GM12878 (cell line): ENCODE measurements at regions of chr4 and their contacts with region 1.

Region 1: GRCh38 chr4:81052119-81053068 is 21.9 kb downstream of the BMP3 start:
- DNase-seq: peak; percentile 91
- ATAC-seq: peak; percentile 99
- H3K4me3 ChIP-seq: no peak overlapping the region
- H3K27ac ChIP-seq: no peak overlapping the region; the same call in 1 of the 2 replicates
- H3K4me1 ChIP-seq: peaks cover 14% of the 10 kb centered on the region
- H3K27me3 ChIP-seq: no peaks in the 10 kb centered on the region
- CTCF ChIP-seq: peak; percentile 61 to 73 (median 66)
- EP300 ChIP-seq: peak; percentile 84 to 91; a peak in 3 of 4 replicates
- POLR2A ChIP-seq: no peak
- RAD21 ChIP-seq: peak; percentile 76

Region 2: DNA sequence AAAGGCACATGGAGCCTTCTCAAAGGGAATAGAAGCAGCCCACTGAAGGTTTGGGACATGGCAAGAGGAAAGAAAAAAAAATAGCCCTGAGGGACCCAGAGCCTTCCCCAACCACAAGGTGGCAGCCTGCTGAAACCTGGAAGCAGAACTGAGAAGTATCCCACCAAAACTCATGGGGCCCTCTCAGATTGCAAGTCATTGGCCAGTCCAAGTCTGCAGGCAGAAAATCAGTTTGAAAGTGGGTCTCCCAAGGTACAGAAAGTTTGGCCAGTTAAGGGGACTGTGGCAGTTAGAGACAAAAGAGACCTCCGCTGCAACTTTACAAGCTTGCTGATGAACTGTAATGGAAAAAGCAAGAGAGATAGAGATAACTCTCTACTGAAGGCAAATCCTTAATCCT is 1135.1 kb before region 1 on chr4:
- CTCF ChIA-PET with region 1: no interaction called
- POLR2A ChIA-PET with region 1: no interaction called
- RAD21 ChIA-PET with region 1: no interaction called
- SMC1A ChIA-PET with region 1: no interaction called
- in situ Hi-C with region 1: no loop called
- intact Hi-C with region 1: loop called (anchors 5 kb)
- DNase-seq: peak; percentile 8
- ATAC-seq: peak; percentile 92
- H3K4me3 ChIP-seq: no peak overlapping the region
- H3K27ac ChIP-seq: no peak overlapping the region
- H3K4me1 ChIP-seq: no peaks in the 10 kb centered on the region
- H3K27me3 ChIP-seq: no peaks in the 10 kb centered on the region
- CTCF ChIP-seq: peak; percentile 68 to 83 (median 71)
- EP300 ChIP-seq: no peak
- POLR2A ChIP-seq: no peak
- RAD21 ChIP-seq: peak; percentile 71

Region 3: DNA sequence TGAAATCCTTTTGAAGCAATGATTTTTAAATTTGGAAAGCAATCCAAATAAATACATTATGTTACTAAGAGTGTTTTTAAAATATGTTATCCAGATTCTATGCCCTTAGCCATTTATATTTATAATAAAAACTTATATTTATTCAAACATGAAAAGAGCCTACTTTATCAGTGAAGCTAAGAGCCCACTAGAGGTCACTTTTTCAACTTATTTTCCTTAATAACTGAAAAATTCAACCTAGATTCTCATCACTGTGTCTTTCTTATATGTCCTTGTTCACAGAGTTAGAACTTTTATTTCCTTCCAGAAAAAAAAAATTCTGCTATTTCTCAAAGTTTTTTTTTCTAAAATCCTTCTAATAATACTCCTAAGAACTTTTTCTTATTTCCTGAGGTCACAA is 831.2 kb before region 1 on chr4:
- CTCF ChIA-PET with region 1: interaction called, 14 read pairs
- POLR2A ChIA-PET with region 1: no interaction called
- RAD21 ChIA-PET with region 1: interaction called, 3 read pairs
- SMC1A ChIA-PET with region 1: interaction called, 4 read pairs
- in situ Hi-C with region 1: no loop called
- intact Hi-C with region 1: loop called (anchors 5 kb)
- DNase-seq: no peak
- ATAC-seq: peak; percentile 55
- H3K4me3 ChIP-seq: no peak overlapping the region
- H3K27ac ChIP-seq: no peak overlapping the region
- H3K4me1 ChIP-seq: no peaks in the 10 kb centered on the region
- H3K27me3 ChIP-seq: peaks cover 0 to 8% of the 10 kb centered on the region in 2 experiments; a peak in 2 of 4 replicates
- CTCF ChIP-seq: peak in 2 of 3 experiments; percentile 14 to 25; a peak in 4 of 6 replicates
- EP300 ChIP-seq: no peak
- POLR2A ChIP-seq: no peak
- RAD21 ChIP-seq: peak; percentile 52

Region 4: DNA sequence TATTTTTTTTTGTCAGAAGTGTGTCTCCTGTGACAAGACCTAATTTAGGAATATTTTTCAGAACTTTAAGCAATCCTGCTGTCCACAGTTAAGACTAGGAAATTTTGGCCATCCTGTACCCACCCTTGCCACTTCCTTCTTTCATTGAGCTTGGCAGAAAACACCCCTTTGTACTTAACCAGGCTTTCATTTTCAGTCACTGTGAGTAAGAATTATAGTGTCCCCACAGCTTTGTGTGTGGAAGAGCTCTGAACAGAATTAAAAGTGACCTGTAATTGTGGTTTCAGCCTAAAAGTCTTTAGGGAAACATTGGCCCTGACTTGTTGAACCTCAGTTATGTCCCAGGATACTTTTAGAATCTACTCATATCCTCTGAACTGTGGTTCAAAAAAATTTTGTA is 175.6 kb before region 1 on chr4:
- CTCF ChIA-PET with region 1: interaction called, 8 read pairs
- POLR2A ChIA-PET with region 1: no interaction called
- RAD21 ChIA-PET with region 1: no interaction called
- SMC1A ChIA-PET with region 1: interaction called, 6 read pairs
- in situ Hi-C with region 1: no loop called
- intact Hi-C with region 1: loop called (anchors 2 kb)
- DNase-seq: peak; percentile 73
- ATAC-seq: peak; percentile 81
- H3K4me3 ChIP-seq: no peak overlapping the region
- H3K27ac ChIP-seq: peak overlapping the region; percentile 35
- H3K4me1 ChIP-seq: peaks cover 13% of the 10 kb centered on the region
- H3K27me3 ChIP-seq: no peaks in the 10 kb centered on the region
- CTCF ChIP-seq: no peak
- EP300 ChIP-seq: peak; percentile 45 to 85; a peak in 2 of 4 replicates
- POLR2A ChIP-seq: no peak
- RAD21 ChIP-seq: peak; percentile 15; the same call in 1 of the 2 replicates

Region 5: GRCh38 chr4:81069706-81070331 is 17.4 kb after region 1 on chr4:
- CTCF ChIA-PET with region 1: interaction called, 22 read pairs
- POLR2A ChIA-PET with region 1: no interaction called
- RAD21 ChIA-PET with region 1: interaction called, 7 read pairs
- SMC1A ChIA-PET with region 1: interaction called, 12 read pairs
- in situ Hi-C with region 1: no loop called
- intact Hi-C with region 1: no loop called
- DNase-seq: peak; percentile 32
- ATAC-seq: peak; percentile 96
- H3K4me3 ChIP-seq: no peak overlapping the region
- H3K27ac ChIP-seq: no peak overlapping the region
- H3K4me1 ChIP-seq: no peaks in the 10 kb centered on the region
- H3K27me3 ChIP-seq: 0 out of 4 replicates have a peak, but pooled peaks cover 0 to 2% of the 10 kb centered on the region in 2 experiments
- CTCF ChIP-seq: peak; percentile 80 to 93 (median 93)
- EP300 ChIP-seq: no peak
- POLR2A ChIP-seq: no peak
- RAD21 ChIP-seq: peak; percentile 80

Region 6: DNA sequence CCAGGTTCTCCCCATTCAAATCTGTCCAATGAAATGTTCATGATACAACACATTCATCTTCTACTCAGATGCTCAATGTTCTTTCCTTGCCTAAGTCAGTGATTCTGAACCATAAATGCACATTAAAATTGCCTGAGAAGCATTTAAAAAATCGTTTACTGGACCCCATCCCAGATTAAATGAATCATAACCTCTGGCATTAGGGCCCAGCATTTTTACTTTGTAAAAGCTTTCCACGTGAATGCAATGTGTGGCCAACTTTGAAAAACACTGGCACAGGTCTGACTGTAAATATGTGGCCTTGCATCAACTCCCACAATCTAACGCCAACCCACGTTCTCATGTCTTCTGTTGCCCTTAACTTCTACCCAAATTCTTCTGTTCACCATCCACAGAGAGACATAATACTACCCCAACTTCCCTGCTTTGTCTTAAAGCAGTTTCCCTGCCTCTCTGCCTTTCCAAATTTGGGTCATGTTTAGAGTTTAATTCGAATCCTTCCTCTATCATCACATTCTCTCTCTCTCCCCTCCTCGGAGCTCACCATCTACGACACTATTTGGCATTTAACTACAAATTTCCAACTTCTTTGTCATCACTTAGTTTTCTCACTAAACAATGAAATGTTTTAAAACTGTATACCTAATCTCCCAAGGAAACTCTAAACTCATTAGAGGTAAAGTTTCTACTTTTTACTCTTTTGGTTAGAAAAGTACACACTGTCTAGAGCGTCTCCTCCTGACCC is 83.9 kb after region 1 on chr4:
- CTCF ChIA-PET with region 1: no interaction called
- POLR2A ChIA-PET with region 1: no interaction called
- RAD21 ChIA-PET with region 1: no interaction called
- SMC1A ChIA-PET with region 1: no interaction called
- in situ Hi-C with region 1: no loop called
- intact Hi-C with region 1: no loop called
- DNase-seq: no peak
- ATAC-seq: no peak
- H3K4me3 ChIP-seq: no peak overlapping the region
- H3K27ac ChIP-seq: no peak overlapping the region
- H3K4me1 ChIP-seq: no peaks in the 10 kb centered on the region
- H3K27me3 ChIP-seq: no peaks in the 10 kb centered on the region
- CTCF ChIP-seq: no peak
- EP300 ChIP-seq: no peak
- POLR2A ChIP-seq: no peak
- RAD21 ChIP-seq: no peak